ENCODE measurements at regions of chr1 and their contacts with region 1.

Region 1: GRCh38 chr1:92536980-92537884 is 50.5 kb upstream of the GFI1 start:
- DNase-seq: no peak
- ATAC-seq: peak; percentile 53
- H3K4me3 Mint-ChIP-seq: peak overlapping the region; percentile 70
- H3K27ac Mint-ChIP-seq: peak overlapping the region; percentile 98
- H3K4me1 Mint-ChIP-seq: peaks cover 89% of the 10 kb centered on the region
- H3K27me3 Mint-ChIP-seq: no peaks in the 10 kb centered on the region

Region 2: GRCh38 chr1:91555821-91556531 is 981.3 kb before region 1 on chr1:
- CTCF ChIA-PET with region 1: no interaction called
- POLR2A ChIA-PET with region 1: no interaction called
- intact Hi-C with region 1: loop called in 1 of 2 experiments (anchors 2 kb)
- DNase-seq: peak; percentile 78
- ATAC-seq: peak; percentile 88
- H3K4me3 Mint-ChIP-seq: peak overlapping the region; percentile 60
- H3K27ac Mint-ChIP-seq: peak overlapping the region; percentile 97
- H3K4me1 Mint-ChIP-seq: peaks cover 83% of the 10 kb centered on the region
- H3K27me3 Mint-ChIP-seq: no peaks in the 10 kb centered on the region

Region 3: DNA sequence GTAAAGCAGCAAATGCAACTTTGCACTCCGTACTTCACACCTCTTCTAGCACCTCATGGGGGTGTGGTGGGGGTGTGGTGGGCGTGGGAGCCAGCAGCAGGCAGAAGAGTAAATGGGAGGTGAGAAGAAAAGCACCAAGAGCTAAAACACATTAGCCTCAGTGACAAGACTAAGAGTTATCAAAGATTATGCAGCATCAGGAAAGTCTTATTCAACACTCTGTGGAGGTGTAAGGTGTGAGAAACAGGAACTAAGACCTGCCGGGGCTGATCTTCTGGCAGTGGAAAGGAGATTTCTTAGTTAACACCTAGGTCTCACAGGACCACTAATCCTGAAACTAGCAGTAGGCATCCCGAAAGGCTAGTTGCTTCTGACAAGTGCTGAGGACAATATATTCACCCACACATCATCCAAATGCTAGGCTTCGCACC is 661.2 kb before region 1 on chr1:
- CTCF ChIA-PET with region 1: no interaction called
- POLR2A ChIA-PET with region 1: no interaction called
- intact Hi-C with region 1: loop called (anchors 1 to 5 kb)
- DNase-seq: peak; percentile 68
- ATAC-seq: peak; percentile 83
- H3K4me3 Mint-ChIP-seq: no peak overlapping the region
- H3K27ac Mint-ChIP-seq: peak overlapping the region; percentile 29
- H3K4me1 Mint-ChIP-seq: peaks cover 79% of the 10 kb centered on the region
- H3K27me3 Mint-ChIP-seq: no peaks in the 10 kb centered on the region

Region 4: DNA sequence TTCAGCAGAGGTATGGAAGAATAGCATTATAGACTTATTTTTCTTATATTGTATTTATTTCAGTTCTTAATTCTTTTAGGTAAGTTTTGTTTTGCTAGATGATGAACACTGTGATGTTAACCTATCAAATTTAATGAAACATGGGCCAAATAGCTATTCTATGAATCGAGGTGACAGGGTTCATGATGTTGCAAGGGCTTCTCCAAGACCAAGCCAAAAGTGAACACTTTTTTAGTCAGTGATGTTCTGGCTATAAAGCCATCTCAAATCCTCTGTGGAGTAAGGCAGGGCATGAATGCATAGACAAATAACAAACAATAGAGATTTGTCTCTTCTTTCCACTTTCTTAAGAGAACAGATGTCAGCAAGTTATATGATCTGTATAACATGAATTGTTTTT is 292.9 kb before region 1 on chr1:
- CTCF ChIA-PET with region 1: no interaction called
- POLR2A ChIA-PET with region 1: no interaction called
- intact Hi-C with region 1: no loop called
- DNase-seq: no peak
- ATAC-seq: no peak
- H3K4me3 Mint-ChIP-seq: no peak overlapping the region
- H3K27ac Mint-ChIP-seq: no peak overlapping the region
- H3K4me1 Mint-ChIP-seq: no peaks in the 10 kb centered on the region
- H3K27me3 Mint-ChIP-seq: no peaks in the 10 kb centered on the region

Region 5: GRCh38 chr1:92367496-92367895 is 169.7 kb before region 1 on chr1:
- CTCF ChIA-PET with region 1: no interaction called
- POLR2A ChIA-PET with region 1: interaction called, 4 read pairs
- intact Hi-C with region 1: loop called in 1 of 2 experiments (anchors 5 kb)
- DNase-seq: no peak
- ATAC-seq: peak; percentile 55
- H3K4me3 Mint-ChIP-seq: no peak overlapping the region
- H3K27ac Mint-ChIP-seq: no peak overlapping the region
- H3K4me1 Mint-ChIP-seq: peaks cover 42% of the 10 kb centered on the region
- H3K27me3 Mint-ChIP-seq: no peaks in the 10 kb centered on the region

Region 6: GRCh38 chr1:92502247-92502646 is 35.0 kb before region 1 on chr1:
- CTCF ChIA-PET with region 1: no interaction called
- POLR2A ChIA-PET with region 1: no interaction called
- intact Hi-C with region 1: loop called in 1 of 2 experiments (anchors 5 kb)
- DNase-seq: no peak
- ATAC-seq: peak; percentile 65
- H3K4me3 Mint-ChIP-seq: no peak overlapping the region
- H3K27ac Mint-ChIP-seq: peak overlapping the region; percentile 55
- H3K4me1 Mint-ChIP-seq: peaks cover 40% of the 10 kb centered on the region
- H3K27me3 Mint-ChIP-seq: no peaks in the 10 kb centered on the region

Region 7: DNA sequence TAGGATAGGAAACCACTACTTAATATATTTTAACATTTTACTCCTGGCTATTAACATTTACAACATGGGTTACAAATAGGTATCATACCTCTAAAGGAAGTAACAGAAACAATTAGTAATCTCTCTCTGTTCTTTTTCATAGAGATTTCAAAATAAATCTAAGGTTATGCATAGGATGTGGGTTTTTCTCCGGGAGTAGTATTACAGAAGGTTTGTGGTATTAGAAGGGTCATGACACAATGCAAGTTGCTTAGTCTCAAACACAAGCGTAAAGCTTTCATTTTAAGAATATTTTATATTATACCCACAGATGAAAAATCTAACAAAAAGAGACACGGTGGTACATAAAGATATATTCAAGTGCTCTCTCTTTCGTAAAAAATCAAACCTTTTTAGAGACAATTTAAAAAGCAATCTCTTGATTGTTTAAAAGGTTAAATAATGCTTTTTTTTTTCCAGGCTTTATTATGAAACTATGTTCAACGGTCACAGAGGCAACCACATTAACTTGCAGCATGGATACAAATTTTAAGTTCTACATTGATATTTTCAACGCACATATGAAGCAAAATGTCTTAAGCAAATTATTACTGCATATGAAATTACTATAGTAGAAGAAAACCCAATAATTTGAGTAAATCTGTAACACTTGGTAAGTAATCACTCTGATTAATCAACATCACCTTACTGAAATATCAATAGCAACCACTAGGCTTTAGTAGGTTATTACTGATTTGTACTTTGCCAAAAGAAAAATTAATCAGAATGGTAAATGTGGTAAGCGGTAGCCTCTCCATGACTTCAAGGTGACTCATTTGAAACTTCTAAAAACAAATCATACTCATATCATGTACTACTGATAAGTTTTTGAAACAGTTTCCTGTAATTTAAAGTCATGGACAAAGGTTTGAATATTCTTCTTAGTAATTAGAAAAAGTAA is 46.9 kb after region 1 on chr1:
- CTCF ChIA-PET with region 1: interaction called, 22 read pairs
- POLR2A ChIA-PET with region 1: interaction called, 24 read pairs
- intact Hi-C with region 1: loop called (anchors 1 kb)
- DNase-seq: no peak
- ATAC-seq: peak; percentile 60
- H3K4me3 Mint-ChIP-seq: peak overlapping the region; percentile 68
- H3K27ac Mint-ChIP-seq: peak overlapping the region; percentile 92
- H3K4me1 Mint-ChIP-seq: peaks cover 79% of the 10 kb centered on the region
- H3K27me3 Mint-ChIP-seq: no peaks in the 10 kb centered on the region

Measured in activated CD4-positive, alpha-beta T cell treated with anti-CD3 and anti-CD28 coated beads for 36 hours (primary cell).